PC-3 (cell line): ENCODE measurements at regions of chr18 and their contacts with region 1.

Region 1: GRCh38 chr18:35290073-35290735 is at the start of gene ZSCAN30:
- DNase-seq: peak; percentile 79
- ATAC-seq: peak; percentile 94
- H3K4me3 ChIP-seq: peak within 1 kb of the TSS; percentile 82
- H3K27ac ChIP-seq: peak within 1 kb of the TSS; percentile 56
- H3K4me1 ChIP-seq: no peaks in the 10 kb centered on the region; the same call in 1 of the 2 replicates
- H3K27me3 ChIP-seq: no peaks in the 10 kb centered on the region
- CTCF ChIP-seq: no peak
- total RNA-seq, gene ZSCAN30: 2.8 and 3.5 TPM in 2 replicates

Region 2: DNA sequence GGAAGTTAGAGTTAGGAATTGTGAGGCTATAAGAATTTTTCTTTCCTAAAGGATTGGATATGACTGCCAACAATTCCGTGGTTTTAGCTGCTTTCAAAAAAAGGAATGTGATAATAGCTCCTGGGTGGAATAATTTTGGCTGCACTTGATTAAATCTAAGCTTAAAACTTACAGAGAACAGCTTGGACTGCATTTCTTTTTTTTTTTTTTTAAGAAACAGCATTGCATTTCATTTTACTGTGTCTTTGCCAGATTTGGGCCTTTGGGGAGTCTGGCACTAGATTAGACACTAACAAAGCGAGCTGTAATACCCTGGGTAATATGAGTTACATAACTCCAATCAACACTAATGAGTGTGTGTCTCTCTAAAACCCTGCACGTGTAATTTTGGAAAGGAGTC is 87.1 kb before region 1 on chr18:
- CTCF ChIA-PET with region 1: no interaction called
- POLR2A ChIA-PET with region 1: no interaction called
- intact Hi-C with region 1: no loop called
- DNase-seq: no peak
- ATAC-seq: no peak
- H3K4me3 ChIP-seq: no peak overlapping the region
- H3K27ac ChIP-seq: no peak overlapping the region
- H3K4me1 ChIP-seq: no peaks in the 10 kb centered on the region
- H3K27me3 ChIP-seq: no peaks in the 10 kb centered on the region
- CTCF ChIP-seq: no peak

Region 3: DNA sequence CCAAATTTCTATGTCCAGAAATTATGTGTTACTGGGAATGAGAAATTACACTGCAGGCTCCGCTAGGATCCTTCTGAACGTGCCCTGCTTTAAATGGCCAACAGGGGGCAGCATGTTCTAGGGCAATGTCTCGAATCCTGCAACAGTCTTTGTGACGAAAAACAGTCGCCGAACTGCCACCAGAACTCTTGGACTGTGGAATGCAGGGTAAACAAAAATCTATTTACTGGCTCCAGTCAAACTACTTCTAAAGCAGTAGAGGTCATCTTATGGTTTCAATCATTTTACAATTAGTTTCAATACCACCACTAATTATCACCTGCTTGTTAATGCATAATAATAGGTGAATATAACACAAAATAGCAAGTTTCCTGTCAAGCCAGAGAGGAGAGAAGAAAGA is 59.2 kb before region 1 on chr18:
- CTCF ChIA-PET with region 1: no interaction called
- POLR2A ChIA-PET with region 1: interaction called, 10 read pairs
- intact Hi-C with region 1: no loop called
- DNase-seq: peak; percentile 58
- ATAC-seq: peak; percentile 77
- H3K4me3 ChIP-seq: peak overlapping the region; percentile 40; the same call in 1 of the 2 replicates
- H3K27ac ChIP-seq: no peak overlapping the region
- H3K4me1 ChIP-seq: no peaks in the 10 kb centered on the region
- H3K27me3 ChIP-seq: no peaks in the 10 kb centered on the region
- CTCF ChIP-seq: peak; percentile 67

Region 4: DNA sequence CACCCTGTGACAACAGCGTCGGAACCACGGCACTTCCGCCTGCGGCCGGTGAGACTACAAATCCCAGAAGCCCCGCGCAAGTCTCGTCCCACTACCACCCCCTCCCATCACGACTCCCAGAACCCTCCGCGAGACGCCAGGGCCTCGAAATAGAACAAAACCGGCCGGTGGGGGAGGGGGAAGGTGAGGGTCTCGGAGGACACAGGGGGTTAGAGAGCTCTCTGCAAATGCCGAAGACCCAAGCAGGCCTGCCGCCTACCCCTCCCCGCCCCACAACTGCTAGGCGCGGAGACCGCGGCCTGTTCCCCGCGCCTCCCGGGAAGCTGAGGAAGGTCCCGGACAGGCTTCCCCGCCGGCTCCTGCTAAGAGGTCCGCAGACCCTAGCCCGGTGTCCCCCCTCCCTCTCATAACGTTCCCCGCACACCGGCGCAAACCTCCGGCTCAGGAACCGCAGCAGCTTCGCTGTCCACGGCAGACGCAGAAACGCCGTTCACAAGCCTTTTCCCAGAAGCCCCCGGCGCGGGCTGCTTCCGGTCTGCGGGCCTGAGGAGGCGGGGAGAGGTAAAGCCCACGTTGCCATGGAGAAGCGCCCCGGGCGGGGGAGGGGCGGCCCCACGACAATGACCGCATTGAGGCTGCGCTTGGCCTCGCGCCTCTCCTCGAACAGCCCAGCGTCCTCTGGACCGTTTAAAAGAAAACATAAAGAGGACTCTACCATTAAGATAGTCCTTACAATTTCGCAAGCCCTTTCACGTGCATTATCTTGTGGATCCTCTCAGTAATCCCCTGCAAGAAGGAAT is 53.9 kb after region 1 on chr18 and contains the start of gene ZNF24:
- CTCF ChIA-PET with region 1: no interaction called
- POLR2A ChIA-PET with region 1: no interaction called
- intact Hi-C with region 1: loop called (anchors 2 kb)
- DNase-seq: peak; percentile 74
- ATAC-seq: peak; percentile 83
- H3K4me3 ChIP-seq: peak within 1 kb of the TSS; percentile 76
- H3K27ac ChIP-seq: peak within 1 kb of the TSS; percentile 74
- H3K4me1 ChIP-seq: peaks cover 11% of the 10 kb centered on the region; the same call in 1 of the 2 replicates
- H3K27me3 ChIP-seq: no peaks in the 10 kb centered on the region
- CTCF ChIP-seq: no peak
- total RNA-seq, gene ZNF24: 10.4 and 11.0 TPM in 2 replicates

Region 5: GRCh38 chr18:35939138-35939537 is 648.9 kb after region 1 on chr18:
- CTCF ChIA-PET with region 1: no interaction called
- POLR2A ChIA-PET with region 1: no interaction called
- intact Hi-C with region 1: no loop called
- DNase-seq: peak; percentile 3
- ATAC-seq: no peak
- H3K4me3 ChIP-seq: no peak overlapping the region
- H3K27ac ChIP-seq: peak overlapping the region; percentile 74
- H3K4me1 ChIP-seq: peaks cover 26% of the 10 kb centered on the region
- H3K27me3 ChIP-seq: no peaks in the 10 kb centered on the region
- CTCF ChIP-seq: no peak; the same call in 1 of the 2 replicates